Caco-2 (cell line): ENCODE measurements at regions of chr14 and their contacts with region 1.

Region 1: DNA sequence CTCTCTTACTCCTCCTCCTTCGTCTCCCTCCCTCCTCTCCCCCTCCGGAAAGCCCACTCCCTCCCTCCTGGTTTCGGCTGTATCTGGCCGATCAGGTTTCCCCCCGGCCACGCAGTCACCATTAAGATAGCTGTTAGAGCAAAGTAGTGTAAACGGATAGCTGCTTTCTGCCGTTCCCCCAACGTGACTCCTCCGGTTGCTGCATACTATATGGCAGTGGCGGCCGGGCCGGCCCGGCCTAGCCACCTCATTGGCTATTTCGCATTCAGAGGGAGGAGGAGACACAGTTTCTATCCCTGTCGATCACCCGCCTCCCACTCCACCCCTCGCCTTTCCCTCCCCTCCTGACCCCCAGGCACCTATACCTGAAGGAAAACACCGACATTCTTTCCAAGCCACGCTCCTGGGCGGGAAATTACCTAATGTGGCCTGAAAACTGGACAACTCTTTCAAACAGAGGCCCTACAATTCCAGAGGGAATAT is at the start of gene SIX4:
- DNase-seq: peak; percentile 79 to 90
- H3K4me3 ChIP-seq: peak within 1 kb of the TSS; percentile 84
- H3K4me3 Mint-ChIP-seq: peak within 1 kb of the TSS; percentile 84
- H3K27ac Mint-ChIP-seq: peak within 1 kb of the TSS; percentile 66
- H3K4me1 ChIP-seq: peaks cover 5% of the 10 kb centered on the region; the same call in 1 of the 2 replicates
- H3K4me1 Mint-ChIP-seq: peaks cover 6% of the 10 kb centered on the region
- H3K27me3 ChIP-seq: no peaks in the 10 kb centered on the region
- H3K27me3 Mint-ChIP-seq: peaks cover 4% of the 10 kb centered on the region
- CTCF ChIP-seq: no peak
- total RNA-seq, gene SIX4: 4.3 and 4.8 TPM in 2 replicates

Region 2: DNA sequence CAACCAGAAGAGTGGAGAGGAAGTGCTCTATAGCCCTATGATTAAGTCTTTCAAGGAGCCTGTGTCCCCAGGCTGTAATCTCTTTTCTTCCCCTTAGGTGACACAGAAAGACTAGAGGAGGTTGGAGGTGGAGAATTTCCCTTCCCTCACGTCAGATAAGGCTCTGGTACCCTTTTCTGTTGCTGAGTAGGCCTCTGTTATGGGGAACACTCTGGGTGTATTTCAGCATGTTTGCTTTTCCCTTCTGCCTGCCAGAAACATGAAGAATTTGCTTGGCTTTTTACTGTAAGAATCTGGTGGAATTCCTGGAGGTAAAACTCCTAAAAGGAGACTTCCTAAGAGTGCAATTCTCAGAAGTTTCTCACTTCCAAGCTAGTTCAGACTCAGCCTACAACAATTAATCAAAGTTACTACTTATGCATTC is 133.2 kb before region 1 on chr14:
- CTCF ChIA-PET with region 1: no interaction called
- POLR2A ChIA-PET with region 1: no interaction called
- intact Hi-C with region 1: no loop called
- DNase-seq: no peak
- H3K4me3 ChIP-seq: no peak overlapping the region
- H3K4me3 Mint-ChIP-seq: no peak overlapping the region
- H3K27ac Mint-ChIP-seq: no peak overlapping the region
- H3K4me1 ChIP-seq: no peaks in the 10 kb centered on the region
- H3K4me1 Mint-ChIP-seq: no peaks in the 10 kb centered on the region
- H3K27me3 ChIP-seq: no peaks in the 10 kb centered on the region
- H3K27me3 Mint-ChIP-seq: peaks cover 3% of the 10 kb centered on the region
- CTCF ChIP-seq: no peak

Region 3: GRCh38 chr14:60622917-60623257 is 101.3 kb before region 1 on chr14:
- CTCF ChIA-PET with region 1: no interaction called
- POLR2A ChIA-PET with region 1: no interaction called
- intact Hi-C with region 1: loop called (anchors 1 kb)
- DNase-seq: no peak
- H3K4me3 ChIP-seq: no peak overlapping the region
- H3K4me3 Mint-ChIP-seq: no peak overlapping the region
- H3K27ac Mint-ChIP-seq: no peak overlapping the region
- H3K4me1 ChIP-seq: peaks cover 6% of the 10 kb centered on the region
- H3K4me1 Mint-ChIP-seq: peaks cover 1% of the 10 kb centered on the region
- H3K27me3 ChIP-seq: no peaks in the 10 kb centered on the region
- H3K27me3 Mint-ChIP-seq: no peaks in the 10 kb centered on the region
- CTCF ChIP-seq: no peak

Region 4: GRCh38 chr14:60648934-60649874 is 75.0 kb before region 1 on chr14 and contains the start of gene SIX1:
- CTCF ChIA-PET with region 1: interaction called, 5 read pairs
- POLR2A ChIA-PET with region 1: no interaction called
- intact Hi-C with region 1: loop called (anchors 2 kb)
- DNase-seq: peak; percentile 75 to 76
- H3K4me3 ChIP-seq: peak within 1 kb of the TSS; percentile 42
- H3K4me3 Mint-ChIP-seq: peak within 1 kb of the TSS; percentile 77
- H3K27ac Mint-ChIP-seq: no peak within 1 kb of the TSS
- H3K4me1 ChIP-seq: peaks cover 36% of the 10 kb centered on the region
- H3K4me1 Mint-ChIP-seq: peaks cover 24% of the 10 kb centered on the region
- H3K27me3 ChIP-seq: peaks cover 6% of the 10 kb centered on the region
- H3K27me3 Mint-ChIP-seq: peaks cover 33% of the 10 kb centered on the region
- CTCF ChIP-seq: no peak
- total RNA-seq, gene SIX1: 0.26 and 0.32 TPM in 2 replicates

Region 5: DNA sequence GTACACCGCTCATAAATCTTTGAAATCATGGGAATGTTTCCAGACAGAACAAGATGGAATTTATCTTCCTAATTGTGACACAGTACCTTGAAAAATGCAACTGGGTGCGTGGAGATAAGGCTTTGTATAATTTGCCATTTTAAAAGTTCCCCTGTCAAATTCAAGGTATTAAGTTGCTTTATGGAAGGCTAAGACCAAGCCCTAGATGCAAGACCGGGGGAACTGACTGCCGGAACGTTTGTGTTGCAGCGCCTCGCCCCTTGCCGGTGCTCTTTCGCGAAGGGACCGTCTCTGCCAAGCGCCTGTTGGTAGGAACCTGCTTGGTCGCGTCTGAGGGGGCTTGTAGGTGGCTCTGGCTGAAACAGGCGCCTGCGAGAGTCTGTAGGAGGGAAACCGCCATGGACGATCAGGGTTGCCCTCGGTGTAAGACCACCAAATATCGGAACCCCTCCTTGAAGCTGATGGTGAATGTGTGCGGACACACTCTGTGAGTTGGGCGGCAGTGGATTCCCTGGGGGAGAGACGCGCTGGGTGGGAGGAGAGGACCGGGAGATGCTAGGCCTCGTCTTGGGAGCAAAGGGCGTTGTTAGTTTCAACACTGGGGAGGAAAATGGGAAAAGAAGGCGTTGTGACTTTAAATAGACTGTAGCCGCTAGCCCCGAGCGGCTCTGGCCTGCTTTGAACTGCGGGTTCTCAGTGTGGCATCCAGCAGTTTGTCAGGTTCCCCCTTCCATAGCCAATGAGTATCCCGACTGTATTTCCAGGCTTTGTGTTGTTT is 10.5 kb after region 1 on chr14 and contains the start of gene MNAT1:
- CTCF ChIA-PET with region 1: no interaction called
- POLR2A ChIA-PET with region 1: no interaction called
- intact Hi-C with region 1: loop called (anchors 1 kb)
- DNase-seq: peak; percentile 82 to 86
- H3K4me3 ChIP-seq: peak within 1 kb of the TSS; percentile 93
- H3K4me3 Mint-ChIP-seq: peak within 1 kb of the TSS; percentile 96
- H3K27ac Mint-ChIP-seq: peak within 1 kb of the TSS; percentile 89
- H3K4me1 ChIP-seq: peaks cover 8% of the 10 kb centered on the region; the same call in 1 of the 2 replicates
- H3K4me1 Mint-ChIP-seq: peaks cover 6% of the 10 kb centered on the region
- H3K27me3 ChIP-seq: no peaks in the 10 kb centered on the region
- H3K27me3 Mint-ChIP-seq: no peaks in the 10 kb centered on the region
- CTCF ChIP-seq: no peak
- total RNA-seq, gene MNAT1: 36.4 and 38.8 TPM in 2 replicates

Region 6: DNA sequence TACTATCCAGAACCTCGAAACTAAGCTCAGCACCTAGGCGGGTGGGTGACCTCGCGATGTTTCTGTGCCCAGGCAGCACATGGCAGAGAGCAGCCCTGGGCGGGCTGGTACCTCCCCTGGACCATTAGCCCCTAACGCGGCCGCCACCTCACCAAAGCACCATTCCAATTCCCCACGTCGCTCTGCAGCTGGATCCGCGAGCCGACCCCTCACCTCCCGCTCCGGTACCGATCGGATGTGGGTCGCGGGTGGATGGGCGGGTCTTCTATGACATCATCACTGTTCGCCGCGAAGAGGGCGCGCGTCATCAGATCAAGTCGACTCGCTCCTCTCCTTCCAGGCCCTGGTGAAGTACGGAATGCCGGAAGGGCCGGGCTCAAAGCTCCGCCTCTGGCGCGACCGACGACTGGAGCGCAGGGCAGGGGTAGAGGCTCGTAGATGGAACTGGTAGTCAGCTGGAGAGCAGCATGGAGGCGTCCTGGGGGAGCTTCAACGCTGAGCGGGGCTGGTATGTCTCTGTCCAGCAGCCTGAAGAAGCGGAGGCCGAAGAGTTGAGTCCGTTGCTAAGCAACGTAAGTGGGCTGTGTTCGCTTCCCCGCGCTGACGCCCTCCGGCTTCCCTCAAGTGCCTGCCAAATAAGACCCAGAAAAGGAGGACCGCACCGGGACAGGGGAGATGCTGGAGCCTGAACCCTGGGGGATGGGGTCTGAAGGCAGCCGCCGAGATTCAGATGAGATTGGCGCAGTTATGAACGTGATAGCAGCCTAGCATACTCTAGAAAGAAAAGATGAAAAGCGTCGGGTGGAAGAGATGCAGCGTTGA is 256.8 kb after region 1 on chr14 and contains the starts of genes SLC38A6 and TRMT5:
- CTCF ChIA-PET with region 1: no interaction called
- POLR2A ChIA-PET with region 1: interaction called, 3 read pairs
- intact Hi-C with region 1: loop called (anchors 1 kb)
- DNase-seq: peak; percentile 94 to 95
- H3K4me3 ChIP-seq: peak within 1 kb of the TSS; percentile 81
- H3K4me3 Mint-ChIP-seq: no peak within 1 kb of the TSS
- H3K27ac Mint-ChIP-seq: no peak within 1 kb of the TSS
- H3K4me1 ChIP-seq: peaks cover 6% of the 10 kb centered on the region; the same call in 1 of the 2 replicates
- H3K4me1 Mint-ChIP-seq: no peaks in the 10 kb centered on the region
- H3K27me3 ChIP-seq: no peaks in the 10 kb centered on the region
- H3K27me3 Mint-ChIP-seq: no peaks in the 10 kb centered on the region
- CTCF ChIP-seq: no peak
- total RNA-seq, gene SLC38A6: 10.2 and 11.5 TPM in 2 replicates
- total RNA-seq, gene TRMT5: 16.3 and 16.5 TPM in 2 replicates

Region 7: DNA sequence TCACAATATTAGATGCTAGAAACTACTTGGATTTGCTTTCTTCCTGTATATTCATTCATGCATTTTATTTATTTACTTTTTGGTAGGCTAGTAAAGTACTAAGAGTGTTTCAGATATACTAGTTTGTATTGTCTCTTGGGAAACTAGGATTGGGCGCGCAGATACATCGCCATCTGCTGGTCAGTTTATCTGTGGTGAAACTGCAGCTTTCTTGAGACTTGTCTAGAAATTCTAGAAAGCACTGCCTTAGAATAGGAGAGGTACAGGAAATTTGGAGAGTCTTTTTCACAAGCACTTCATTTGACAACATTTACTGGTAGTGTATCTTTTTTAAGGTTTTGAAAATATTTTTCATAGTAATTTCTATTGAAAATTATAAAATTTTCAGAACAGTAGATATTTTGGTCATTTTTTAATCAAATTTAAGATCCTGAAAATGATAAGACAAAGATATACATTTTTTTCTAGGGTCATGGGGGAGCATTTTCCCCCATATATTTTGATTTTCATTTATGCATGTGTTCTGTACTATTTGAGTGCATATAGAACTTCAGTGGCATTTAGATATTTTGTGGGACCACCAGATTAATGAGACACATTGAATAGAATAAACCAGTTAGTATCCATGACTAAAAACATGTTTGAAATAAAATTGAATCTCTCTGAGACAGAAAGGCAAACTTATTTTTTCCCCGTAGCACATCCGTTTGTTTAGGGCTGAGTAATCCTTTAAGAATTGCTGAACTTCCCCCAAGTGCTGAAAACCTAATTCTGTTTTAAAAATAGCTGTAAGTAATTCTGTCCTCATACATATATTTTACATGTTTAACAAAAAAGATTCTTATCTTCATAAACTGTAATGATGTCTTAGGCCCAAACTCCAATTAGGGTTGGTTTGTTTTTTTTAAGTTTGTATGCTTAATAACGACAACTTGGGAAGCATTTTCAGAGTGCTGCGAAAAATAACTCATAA is 301.4 kb after region 1 on chr14:
- CTCF ChIA-PET with region 1: no interaction called
- POLR2A ChIA-PET with region 1: no interaction called
- intact Hi-C with region 1: loop called (anchors 2 kb)
- DNase-seq: peak; percentile 50 to 64
- H3K4me3 ChIP-seq: no peak overlapping the region
- H3K4me3 Mint-ChIP-seq: no peak overlapping the region
- H3K27ac Mint-ChIP-seq: no peak overlapping the region
- H3K4me1 ChIP-seq: no peaks in the 10 kb centered on the region
- H3K4me1 Mint-ChIP-seq: no peaks in the 10 kb centered on the region
- H3K27me3 ChIP-seq: no peaks in the 10 kb centered on the region
- H3K27me3 Mint-ChIP-seq: no peaks in the 10 kb centered on the region
- CTCF ChIP-seq: peak; percentile 70 to 84

Region 8: GRCh38 chr14:61252369-61253063 is 528.3 kb after region 1 on chr14:
- CTCF ChIA-PET with region 1: no interaction called
- POLR2A ChIA-PET with region 1: no interaction called
- intact Hi-C with region 1: loop called (anchors 5 kb)
- DNase-seq: peak; percentile 81
- H3K4me3 ChIP-seq: no peak overlapping the region
- H3K4me3 Mint-ChIP-seq: no peak overlapping the region
- H3K27ac Mint-ChIP-seq: no peak overlapping the region
- H3K4me1 ChIP-seq: 0 out of 2 replicates have a peak, but pooled peaks cover 4% of the 10 kb centered on the region
- H3K4me1 Mint-ChIP-seq: no peaks in the 10 kb centered on the region
- H3K27me3 ChIP-seq: no peaks in the 10 kb centered on the region
- H3K27me3 Mint-ChIP-seq: peaks cover 9% of the 10 kb centered on the region
- CTCF ChIP-seq: peak; percentile 72 to 91